ENCODE measurements at regions of chr14 and their contacts with region 1.

Region 1: DNA sequence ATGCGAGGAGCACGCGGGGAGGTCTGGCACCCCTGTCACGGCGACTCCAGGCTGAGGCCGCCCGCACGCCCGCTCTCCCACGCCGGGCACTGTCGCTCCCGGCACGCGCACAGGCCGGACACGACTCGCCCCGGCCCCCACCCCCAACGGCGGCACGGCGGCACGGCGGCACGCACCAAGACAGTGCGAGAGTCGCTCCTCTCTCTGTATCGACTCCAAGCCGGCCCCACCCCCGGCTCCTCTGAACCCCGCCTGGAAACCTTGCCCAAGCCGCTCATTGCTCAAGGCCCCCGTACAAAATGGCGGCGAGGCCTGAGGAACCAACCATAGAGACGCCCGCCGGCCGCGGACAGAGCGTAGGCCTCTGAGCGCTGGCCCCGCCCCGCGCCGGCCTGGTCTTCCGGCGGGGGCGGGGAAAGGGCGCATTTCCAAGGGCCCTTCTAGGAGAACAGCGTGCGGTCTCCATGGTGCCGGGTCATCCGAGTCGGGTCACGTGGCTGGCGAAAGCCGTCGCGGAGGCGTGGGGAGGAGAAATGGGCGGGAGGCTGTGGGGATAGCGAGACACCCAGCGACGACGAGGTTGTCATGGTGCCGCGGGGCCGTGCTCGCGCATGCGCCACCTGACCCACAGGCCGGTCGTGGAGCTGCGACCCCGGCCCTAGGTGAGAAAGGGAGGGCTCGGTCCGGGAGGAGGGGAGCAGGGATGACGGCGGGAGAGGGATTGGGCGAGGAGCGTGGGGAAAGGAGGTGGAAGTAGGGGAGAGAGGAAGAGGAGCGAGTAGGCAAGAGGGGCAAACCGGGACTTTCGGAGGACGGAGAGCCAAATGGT is at the start of gene CIPC:
- DNase-seq: peak; percentile 98
- ATAC-seq: peak; percentile 89
- H3K4me3 ChIP-seq: peak within 1 kb of the TSS; percentile 85 to 97
- H3K27ac ChIP-seq: peak within 1 kb of the TSS; percentile 91
- H3K4me1 ChIP-seq: peaks cover 24 to 28% of the 10 kb centered on the region in 2 experiments
- H3K27me3 ChIP-seq: no peaks in the 10 kb centered on the region
- CTCF ChIP-seq: no peak
- POLR2A ChIP-seq: peak; percentile 38
- RAD21 ChIP-seq: no peak
- total RNA-seq, gene CIPC: 20.6 TPM

Region 2: GRCh38 chr14:76870166-76870565 is 227.7 kb before region 1 on chr14:
- CTCF ChIA-PET with region 1: interaction called, 131 read pairs
- POLR2A ChIA-PET with region 1: interaction called, 8 read pairs
- RAD21 ChIA-PET with region 1: interaction called, 7 to 13 read pairs
- intact Hi-C with region 1: loop called (anchors 1 kb)
- DNase-seq: no peak
- ATAC-seq: peak; percentile 74
- H3K4me3 ChIP-seq: no peak overlapping the region
- H3K27ac ChIP-seq: no peak overlapping the region
- H3K4me1 ChIP-seq: no peaks in the 10 kb centered on the region
- H3K27me3 ChIP-seq: no peaks in the 10 kb centered on the region
- CTCF ChIP-seq: peak; percentile 47 to 61 (median 49); a peak in 5 of 6 replicates
- POLR2A ChIP-seq: no peak
- RAD21 ChIP-seq: peak; percentile 39; the same call in 1 of the 2 replicates

Region 3: GRCh38 chr14:77067632-77068514 is 30.0 kb before region 1 on chr14:
- CTCF ChIA-PET with region 1: interaction called, 44 read pairs
- POLR2A ChIA-PET with region 1: interaction called, 4 read pairs
- RAD21 ChIA-PET with region 1: interaction called, 4 read pairs
- intact Hi-C with region 1: loop called (anchors 1 kb)
- DNase-seq: peak; percentile 42
- ATAC-seq: peak; percentile 83
- H3K4me3 ChIP-seq: no peak overlapping the region
- H3K27ac ChIP-seq: no peak overlapping the region; the same call in 1 of the 2 replicates
- H3K4me1 ChIP-seq: peaks cover 21 to 34% of the 10 kb centered on the region in 2 experiments
- H3K27me3 ChIP-seq: no peaks in the 10 kb centered on the region
- CTCF ChIP-seq: peak; percentile 87 to 97 (median 95)
- POLR2A ChIP-seq: no peak
- RAD21 ChIP-seq: peak; percentile 99

Region 4: GRCh38 chr14:77076113-77076631 is 21.7 kb before region 1 on chr14:
- CTCF ChIA-PET with region 1: interaction called, 44 read pairs
- POLR2A ChIA-PET with region 1: interaction called, 4 read pairs
- RAD21 ChIA-PET with region 1: interaction called in 1 of 2 experiments, 4 read pairs
- intact Hi-C with region 1: no loop called
- DNase-seq: no peak
- ATAC-seq: no peak
- H3K4me3 ChIP-seq: no peak overlapping the region
- H3K27ac ChIP-seq: no peak overlapping the region
- H3K4me1 ChIP-seq: peaks cover 19 to 31% of the 10 kb centered on the region in 2 experiments
- H3K27me3 ChIP-seq: no peaks in the 10 kb centered on the region
- CTCF ChIP-seq: no peak
- POLR2A ChIP-seq: no peak
- RAD21 ChIP-seq: no peak

Region 5: DNA sequence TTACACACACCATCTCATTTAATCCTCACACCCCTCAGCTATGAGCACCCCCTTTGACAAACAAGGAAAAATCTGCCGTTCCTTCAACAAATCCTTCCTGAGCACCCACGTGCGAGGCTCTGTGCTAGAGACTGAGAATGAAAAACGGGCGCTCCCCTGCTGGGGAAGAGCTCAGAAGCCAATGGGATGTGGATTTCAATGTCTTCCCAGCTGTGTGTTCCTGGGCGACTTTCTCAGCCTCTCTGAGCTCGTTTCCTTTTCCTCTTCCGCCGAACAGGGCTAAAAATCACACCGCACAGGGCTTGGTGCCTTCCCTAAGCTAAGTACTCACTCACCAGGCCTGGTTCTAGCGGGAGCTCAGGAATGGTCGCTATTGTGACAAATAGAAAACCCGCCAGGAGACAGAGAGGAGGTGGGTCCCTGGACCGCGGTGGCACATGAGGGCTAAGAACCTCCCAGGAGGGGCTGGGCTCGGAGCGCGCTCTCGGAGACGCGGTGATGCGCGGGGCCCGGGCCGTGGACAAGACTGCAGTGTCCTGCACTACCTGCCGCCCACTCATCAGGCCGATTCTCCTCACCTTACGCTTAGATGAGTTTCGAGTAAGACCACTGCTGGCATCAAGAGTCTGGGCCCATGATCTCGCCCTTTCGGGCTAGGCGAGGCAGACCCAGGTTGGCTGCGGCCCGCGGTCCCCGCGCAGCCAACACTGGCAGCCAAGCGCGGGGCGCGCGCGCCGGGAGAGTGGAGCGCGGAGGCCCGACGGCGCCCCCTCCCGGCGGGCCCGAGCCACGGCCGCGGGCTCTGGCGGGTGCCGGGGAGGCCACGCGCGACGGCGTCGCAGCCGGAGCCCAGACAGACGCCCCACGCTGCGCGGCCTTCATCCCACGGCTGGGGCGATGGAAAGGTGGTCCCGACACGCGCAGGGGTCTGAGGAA is 26.7 kb after region 1 on chr14:
- CTCF ChIA-PET with region 1: interaction called, 3 read pairs
- POLR2A ChIA-PET with region 1: interaction called, 5 read pairs
- RAD21 ChIA-PET with region 1: interaction called in 1 of 2 experiments, 8 read pairs
- intact Hi-C with region 1: loop called (anchors 2 kb)
- DNase-seq: no peak
- ATAC-seq: no peak
- H3K4me3 ChIP-seq: peak overlapping the region; percentile 15 to 24; a peak in 3 of 4 replicates
- H3K27ac ChIP-seq: peak overlapping the region; percentile 45
- H3K4me1 ChIP-seq: peaks cover 48 to 74% of the 10 kb centered on the region in 2 experiments
- H3K27me3 ChIP-seq: no peaks in the 10 kb centered on the region
- CTCF ChIP-seq: no peak; a peak in 1 of 6 replicates
- POLR2A ChIP-seq: no peak
- RAD21 ChIP-seq: no peak

Region 6: GRCh38 chr14:77516126-77516525 is 418.2 kb after region 1 on chr14:
- CTCF ChIA-PET with region 1: no interaction called
- POLR2A ChIA-PET with region 1: no interaction called
- RAD21 ChIA-PET with region 1: no interaction called
- intact Hi-C with region 1: no loop called
- DNase-seq: no peak
- ATAC-seq: no peak
- H3K4me3 ChIP-seq: no peak overlapping the region
- H3K27ac ChIP-seq: no peak overlapping the region
- H3K4me1 ChIP-seq: no peaks in the 10 kb centered on the region
- H3K27me3 ChIP-seq: no peaks in the 10 kb centered on the region
- CTCF ChIP-seq: no peak
- POLR2A ChIP-seq: no peak
- RAD21 ChIP-seq: no peak